PC-9 (cell line): ENCODE measurements at regions of chr10 and their contacts with region 1.

Region 1: GRCh38 chr10:125201108-125201524 is 40.8 kb upstream of the CTBP2 start:
- DNase-seq: peak; percentile 70 to 92
- H3K4me3 ChIP-seq: peak overlapping the region; percentile 40; the same call in 1 of the 2 replicates
- H3K27ac ChIP-seq: peak overlapping the region; percentile 94
- H3K4me1 ChIP-seq: peaks cover 34% of the 10 kb centered on the region
- H3K27me3 ChIP-seq: no peaks in the 10 kb centered on the region
- CTCF ChIP-seq: no peak

Region 2: GRCh38 chr10:124323111-124323886 is 877.8 kb before region 1 on chr10:
- CTCF ChIA-PET with region 1: no interaction called
- POLR2A ChIA-PET with region 1: no interaction called
- intact Hi-C with region 1: no loop called
- DNase-seq: no peak
- H3K4me3 ChIP-seq: no peak overlapping the region
- H3K27ac ChIP-seq: no peak overlapping the region
- H3K4me1 ChIP-seq: no peaks in the 10 kb centered on the region
- H3K27me3 ChIP-seq: no peaks in the 10 kb centered on the region
- CTCF ChIP-seq: no peak

Region 3: DNA sequence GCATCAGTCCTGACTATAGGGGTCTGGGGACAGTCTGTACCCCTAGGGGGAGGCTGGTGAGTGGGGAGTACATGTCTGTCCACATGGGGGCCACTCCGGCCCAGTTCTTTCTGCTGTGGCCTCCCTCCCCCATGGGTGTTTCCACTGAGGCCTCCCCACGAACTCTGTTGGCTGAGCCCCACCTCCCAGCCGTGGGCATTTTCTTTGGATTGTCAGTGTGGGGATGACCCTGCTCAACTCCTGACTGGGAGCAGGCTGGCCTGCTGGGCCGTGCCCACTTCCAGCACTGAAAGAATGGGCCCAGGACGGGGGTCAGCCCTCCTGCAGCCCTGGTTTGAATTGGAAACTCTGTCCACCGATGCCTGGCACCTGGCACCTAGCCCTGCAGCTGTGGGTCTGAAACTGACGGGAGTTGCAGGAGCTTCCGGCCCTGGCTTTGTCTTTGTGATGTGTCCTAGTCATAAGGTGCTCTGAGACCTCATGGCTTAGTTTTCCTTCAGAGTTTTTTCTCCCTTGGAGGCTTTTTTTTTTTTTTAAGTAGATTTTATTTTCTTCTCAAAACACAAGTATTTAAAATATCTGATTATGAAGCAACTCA is 692.9 kb before region 1 on chr10:
- CTCF ChIA-PET with region 1: no interaction called
- POLR2A ChIA-PET with region 1: no interaction called
- intact Hi-C with region 1: no loop called
- DNase-seq: no peak
- H3K4me3 ChIP-seq: no peak overlapping the region
- H3K27ac ChIP-seq: no peak overlapping the region
- H3K4me1 ChIP-seq: no peaks in the 10 kb centered on the region
- H3K27me3 ChIP-seq: no peaks in the 10 kb centered on the region
- CTCF ChIP-seq: no peak

Region 4: DNA sequence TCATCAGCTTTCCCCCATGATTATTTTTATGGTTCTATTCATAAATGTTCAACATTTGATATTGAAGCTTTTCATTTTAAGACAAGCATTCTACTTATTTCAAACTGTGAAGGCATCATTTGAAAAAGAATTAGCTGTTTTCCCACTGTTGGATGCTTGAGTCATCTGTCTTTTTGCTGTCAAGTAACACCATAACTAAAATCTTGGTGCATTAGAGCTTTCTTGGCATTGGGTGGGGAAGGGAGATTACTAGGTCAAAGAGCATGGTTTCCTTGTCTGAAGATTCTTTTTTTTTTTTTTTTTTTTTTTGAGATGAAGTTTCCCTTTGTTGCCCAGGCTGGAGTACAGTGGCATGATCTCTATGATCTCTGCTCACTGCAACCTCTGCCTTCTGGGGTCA is 109.2 kb before region 1 on chr10:
- CTCF ChIA-PET with region 1: interaction called, 14 read pairs
- POLR2A ChIA-PET with region 1: no interaction called
- intact Hi-C with region 1: no loop called
- DNase-seq: no peak
- H3K4me3 ChIP-seq: no peak overlapping the region
- H3K27ac ChIP-seq: no peak overlapping the region
- H3K4me1 ChIP-seq: no peaks in the 10 kb centered on the region
- H3K27me3 ChIP-seq: no peaks in the 10 kb centered on the region
- CTCF ChIP-seq: no peak

Region 5: DNA sequence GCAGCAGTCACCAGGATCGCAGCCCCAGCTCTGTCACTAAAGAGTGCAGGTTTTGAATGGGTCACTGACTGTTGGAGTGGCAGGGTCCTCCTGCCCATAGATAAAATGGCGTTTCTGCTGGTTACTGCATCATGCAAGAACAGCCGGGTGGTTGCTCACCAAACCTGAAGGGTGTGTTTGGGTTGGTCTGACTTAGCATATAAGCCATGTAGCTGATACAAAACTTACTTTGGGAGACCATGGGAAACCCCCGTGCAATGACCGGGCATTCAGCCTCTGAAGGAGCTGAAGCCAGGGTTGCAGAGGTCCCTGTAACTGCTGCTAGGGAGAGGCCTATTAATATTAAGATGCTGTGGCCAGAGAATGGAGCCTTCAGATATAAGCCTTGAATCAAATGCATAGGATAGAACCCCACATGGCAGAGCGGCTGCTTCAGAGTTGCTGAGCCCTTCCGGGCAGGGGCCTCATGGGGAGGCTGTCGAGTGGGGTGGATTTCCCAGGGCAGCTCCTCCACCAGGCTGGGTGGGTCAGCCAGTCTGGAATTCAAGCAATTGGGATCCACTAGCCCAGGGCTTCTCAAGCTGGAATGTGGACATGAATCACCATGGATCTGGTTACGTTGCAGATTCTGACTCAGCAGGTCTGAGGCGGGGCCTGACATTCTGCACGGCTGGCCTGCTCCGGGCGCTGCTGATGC is 30.1 kb after region 1 on chr10:
- CTCF ChIA-PET with region 1: no interaction called
- POLR2A ChIA-PET with region 1: interaction called, 5 read pairs
- intact Hi-C with region 1: loop called (anchors 1 kb)
- DNase-seq: peak; percentile 84 to 88
- H3K4me3 ChIP-seq: no peak overlapping the region
- H3K27ac ChIP-seq: peak overlapping the region; percentile 67
- H3K4me1 ChIP-seq: peaks cover 29% of the 10 kb centered on the region
- H3K27me3 ChIP-seq: no peaks in the 10 kb centered on the region
- CTCF ChIP-seq: no peak

Region 6: DNA sequence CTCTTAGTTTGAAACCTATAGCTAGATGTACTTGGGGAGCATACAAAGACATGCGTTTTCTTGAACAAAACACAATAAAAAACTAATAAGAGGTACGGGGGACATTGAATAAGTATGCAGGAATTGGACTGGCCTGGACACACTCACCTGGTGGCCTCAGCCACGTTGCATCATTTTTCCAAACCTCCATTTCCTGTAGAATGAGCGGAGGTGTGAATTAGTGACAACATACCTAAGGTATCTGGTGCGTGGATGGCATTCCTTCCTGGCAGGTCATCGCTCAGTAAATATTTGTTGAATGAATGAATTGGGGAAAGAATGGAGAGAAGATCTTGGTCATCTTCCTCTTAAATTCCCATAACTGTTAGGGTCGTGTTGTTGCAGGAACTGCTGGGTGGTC is 62.4 kb after region 1 on chr10:
- CTCF ChIA-PET with region 1: interaction called, 5 read pairs
- POLR2A ChIA-PET with region 1: no interaction called
- intact Hi-C with region 1: loop called (anchors 1 kb)
- DNase-seq: peak; percentile 67 to 91
- H3K4me3 ChIP-seq: peak overlapping the region; percentile 38; the same call in 1 of the 2 replicates
- H3K27ac ChIP-seq: peak overlapping the region; percentile 92
- H3K4me1 ChIP-seq: peaks cover 42% of the 10 kb centered on the region
- H3K27me3 ChIP-seq: no peaks in the 10 kb centered on the region
- CTCF ChIP-seq: no peak

Region 7: DNA sequence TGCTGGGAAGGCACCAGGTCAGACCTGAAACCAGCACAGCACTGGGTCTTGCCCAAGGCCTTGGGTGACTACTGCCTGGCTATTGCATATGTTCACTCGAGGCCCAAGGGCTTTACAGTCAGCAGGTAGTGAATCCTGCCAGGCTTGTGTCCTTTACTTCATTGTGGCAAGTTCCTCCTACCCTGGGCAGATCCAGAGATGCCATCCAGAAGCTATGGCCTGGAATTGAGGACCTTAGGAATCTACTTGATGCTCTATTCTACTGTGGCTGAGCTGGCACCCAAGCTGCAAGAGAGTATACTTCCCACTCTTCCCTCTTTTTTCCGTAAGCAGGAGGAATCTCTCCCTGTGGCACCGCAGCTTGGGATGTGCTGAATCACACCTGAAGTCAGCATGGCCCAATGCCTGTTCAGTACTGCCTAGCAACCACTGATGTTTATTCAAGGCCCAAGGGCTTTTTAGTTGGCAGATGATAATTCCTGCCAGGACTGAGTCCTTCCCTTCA is 205.9 kb after region 1 on chr10:
- CTCF ChIA-PET with region 1: no interaction called
- POLR2A ChIA-PET with region 1: no interaction called
- intact Hi-C with region 1: loop called (anchors 1 kb)
- DNase-seq: peak; percentile 67 to 92
- H3K4me3 ChIP-seq: no peak overlapping the region
- H3K27ac ChIP-seq: peak overlapping the region; percentile 82
- H3K4me1 ChIP-seq: peaks cover 21% of the 10 kb centered on the region
- H3K27me3 ChIP-seq: no peaks in the 10 kb centered on the region
- CTCF ChIP-seq: no peak

Region 8: GRCh38 chr10:125584954-125585353 is 383.8 kb after region 1 on chr10:
- CTCF ChIA-PET with region 1: no interaction called
- POLR2A ChIA-PET with region 1: no interaction called
- intact Hi-C with region 1: loop called (anchors 2 kb)
- DNase-seq: peak; percentile 70 to 92
- H3K4me3 ChIP-seq: no peak overlapping the region
- H3K27ac ChIP-seq: peak overlapping the region; percentile 81
- H3K4me1 ChIP-seq: peaks cover 24% of the 10 kb centered on the region
- H3K27me3 ChIP-seq: no peaks in the 10 kb centered on the region
- CTCF ChIP-seq: no peak